ENCODE measurements at regions of chr7 and their contacts with region 1.

Region 1: DNA sequence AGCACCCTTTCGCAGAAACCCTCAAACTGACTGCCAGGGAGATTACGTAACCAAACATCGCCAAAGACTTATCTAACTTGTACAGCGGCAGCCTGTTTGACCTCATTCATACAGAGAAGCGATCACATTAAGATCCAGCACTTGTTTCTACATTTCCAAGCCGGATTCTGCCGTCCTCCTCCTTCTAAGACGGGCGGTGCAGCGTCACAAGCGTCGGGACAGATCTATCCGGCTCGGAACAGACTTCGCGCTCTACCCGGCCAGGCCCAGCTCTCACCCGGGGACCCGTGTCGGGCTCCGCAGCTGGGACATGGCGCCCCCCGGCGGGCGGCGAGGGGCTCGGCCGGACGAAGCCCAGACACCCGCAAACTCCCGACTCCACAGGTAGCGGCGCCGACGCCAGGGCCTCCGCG is 373 bp downstream of the H2AZ2 start:
- DNase-seq: peak; percentile 69
- ATAC-seq: peak; percentile 83
- H3K4me3 ChIP-seq: peak overlapping the region; percentile 64 to 92 (median 85)
- H3K27ac ChIP-seq: peak overlapping the region; percentile 83
- H3K4me1 ChIP-seq: peaks cover 40% of the 10 kb centered on the region
- H3K27me3 ChIP-seq: no peaks in the 10 kb centered on the region; a peak in 1 of 5 replicates
- CTCF ChIP-seq: peak; percentile 87
- EP300 ChIP-seq: 0 out of 4 replicates have a peak, but pooled peaks of 1 of the 2 experiments have one; percentile 1
- POLR2A ChIP-seq: no peak; a peak in 1 of 4 replicates
- RAD21 ChIP-seq: peak; percentile 97

Region 2: GRCh38 chr7:44515590-44516268 is 331.8 kb before region 1 on chr7:
- CTCF ChIA-PET with region 1: no interaction called
- POLR2A ChIA-PET with region 1: no interaction called
- in situ Hi-C with region 1: no loop called
- intact Hi-C with region 1: no loop called
- DNase-seq: no peak
- ATAC-seq: no peak
- H3K4me3 ChIP-seq: no peak overlapping the region
- H3K27ac ChIP-seq: no peak overlapping the region
- H3K4me1 ChIP-seq: peaks cover 10% of the 10 kb centered on the region
- H3K27me3 ChIP-seq: no peaks in the 10 kb centered on the region
- CTCF ChIP-seq: no peak
- EP300 ChIP-seq: no peak
- POLR2A ChIP-seq: no peak
- RAD21 ChIP-seq: no peak

Region 3: GRCh38 chr7:44581879-44582603 is 265.5 kb before region 1 on chr7 and contains the start of gene TMED4:
- CTCF ChIA-PET with region 1: interaction called, 9 read pairs
- POLR2A ChIA-PET with region 1: interaction called, 19 read pairs
- in situ Hi-C with region 1: no loop called
- intact Hi-C with region 1: no loop called
- DNase-seq: peak; percentile 96
- ATAC-seq: peak; percentile 90
- H3K4me3 ChIP-seq: peak within 1 kb of the TSS; percentile 60 to 87 (median 75)
- H3K27ac ChIP-seq: peak within 1 kb of the TSS; percentile 76
- H3K4me1 ChIP-seq: peaks cover 32% of the 10 kb centered on the region
- H3K27me3 ChIP-seq: peaks cover 0 to 11% of the 10 kb centered on the region in 2 experiments; a peak in 1 of 5 replicates
- CTCF ChIP-seq: no peak
- EP300 ChIP-seq: no peak
- POLR2A ChIP-seq: peak in 1 of 2 experiments; percentile 85; a peak in 2 of 4 replicates
- RAD21 ChIP-seq: peak; percentile 59; the same call in 1 of the 2 replicates
- total RNA-seq, gene TMED4: 39.2 and 81.4 TPM in 2 replicates

Region 4: DNA sequence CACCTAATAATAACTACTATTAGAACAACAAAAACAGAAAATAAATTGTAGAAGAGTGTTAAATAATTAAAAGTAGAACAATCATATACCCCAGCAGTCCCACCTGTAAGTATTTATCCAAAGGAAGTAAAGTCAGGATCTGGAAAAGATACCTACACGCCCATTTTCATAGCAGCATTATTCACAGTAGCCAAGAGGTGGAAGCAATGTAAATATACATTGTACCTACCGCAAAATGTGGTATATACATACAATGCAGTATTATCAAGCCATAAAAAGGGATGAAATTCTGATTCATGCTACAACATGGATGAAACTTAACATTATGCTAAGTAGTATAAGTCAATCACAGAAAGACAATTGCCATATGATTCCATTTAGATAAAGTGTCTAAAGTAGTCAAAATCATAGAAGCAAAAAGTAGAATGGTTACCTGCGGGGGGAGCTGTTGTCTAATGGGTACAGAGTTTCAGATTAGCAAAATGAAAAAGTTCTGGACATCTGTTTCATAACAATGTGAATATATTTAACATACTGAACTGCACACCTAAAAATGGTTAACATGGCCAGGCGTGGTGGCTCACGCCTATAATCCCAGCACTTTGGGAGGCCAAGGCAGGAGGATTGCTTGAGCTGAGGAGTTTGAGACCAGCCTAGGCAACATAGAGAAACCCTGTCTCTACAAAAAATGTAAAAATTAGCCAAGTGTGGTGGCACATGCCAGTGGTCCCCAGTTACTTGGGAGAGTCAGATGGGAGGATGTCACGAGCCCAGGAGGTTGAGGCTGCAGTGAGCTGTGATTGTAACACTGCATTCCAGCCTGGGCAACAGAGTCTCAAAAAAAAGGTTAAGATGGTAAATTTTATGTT is 259.4 kb before region 1 on chr7:
- CTCF ChIA-PET with region 1: interaction called, 9 read pairs
- POLR2A ChIA-PET with region 1: interaction called, 19 read pairs
- in situ Hi-C with region 1: no loop called
- intact Hi-C with region 1: loop called (anchors 1 kb)
- DNase-seq: peak; percentile 55
- ATAC-seq: peak; percentile 74
- H3K4me3 ChIP-seq: no peak overlapping the region
- H3K27ac ChIP-seq: no peak overlapping the region
- H3K4me1 ChIP-seq: peaks cover 8% of the 10 kb centered on the region
- H3K27me3 ChIP-seq: peaks cover 0 to 11% of the 10 kb centered on the region in 2 experiments; a peak in 1 of 5 replicates
- CTCF ChIP-seq: peak; percentile 76
- EP300 ChIP-seq: no peak
- POLR2A ChIP-seq: no peak
- RAD21 ChIP-seq: 0 out of 2 replicates have a peak, but pooled peaks have one; percentile 25

Region 5: DNA sequence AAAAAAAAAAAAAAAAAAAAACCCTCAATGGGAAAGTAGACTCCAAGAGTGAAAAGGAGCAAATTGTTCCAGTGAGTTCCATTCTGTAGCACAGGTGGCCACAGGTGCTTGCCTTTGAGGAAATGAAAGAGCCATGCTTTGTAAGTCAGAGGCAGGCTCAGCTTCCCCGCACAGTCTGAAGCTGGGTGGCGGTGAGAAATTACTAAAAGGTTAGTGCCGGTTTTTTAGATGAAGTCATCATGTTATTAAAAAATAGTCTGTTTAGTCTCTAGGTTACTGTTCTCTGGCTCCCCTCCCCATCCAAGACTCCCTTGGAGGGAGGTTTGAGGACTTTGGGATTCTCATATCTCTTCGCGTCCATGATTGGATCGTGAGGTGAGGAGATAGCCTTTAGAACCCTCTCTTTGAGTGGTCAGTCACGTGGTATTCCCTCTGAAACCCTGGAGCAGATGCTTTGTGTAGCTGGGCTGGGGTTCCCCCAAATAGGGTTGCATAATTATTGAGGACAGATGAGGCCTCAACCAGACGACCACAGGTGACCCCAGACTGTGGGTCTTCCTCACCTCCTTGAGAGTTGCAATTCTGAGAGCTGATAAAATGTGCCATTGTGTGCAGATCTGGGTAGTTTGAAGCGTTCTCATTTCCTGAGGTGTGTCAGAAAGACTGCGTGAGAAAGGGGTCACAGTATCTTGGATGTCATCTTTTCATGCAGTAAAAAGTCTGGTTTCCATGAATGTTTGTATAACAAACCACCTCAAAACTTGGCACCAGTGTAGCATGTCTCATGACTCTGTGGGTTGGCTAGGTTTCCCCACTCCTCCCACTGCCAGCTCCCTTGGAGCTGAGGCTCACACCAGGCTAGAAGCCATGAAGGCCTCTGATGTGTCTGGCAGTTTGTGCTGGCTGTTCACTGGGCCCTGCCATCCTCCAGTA is 214.0 kb before region 1 on chr7:
- CTCF ChIA-PET with region 1: no interaction called
- POLR2A ChIA-PET with region 1: no interaction called
- in situ Hi-C with region 1: no loop called
- intact Hi-C with region 1: no loop called
- DNase-seq: no peak
- ATAC-seq: no peak; the same call in 2 of the 3 replicates
- H3K4me3 ChIP-seq: no peak overlapping the region
- H3K27ac ChIP-seq: no peak overlapping the region
- H3K4me1 ChIP-seq: peaks cover 32% of the 10 kb centered on the region
- H3K27me3 ChIP-seq: no peaks in the 10 kb centered on the region
- CTCF ChIP-seq: no peak
- EP300 ChIP-seq: no peak
- POLR2A ChIP-seq: no peak
- RAD21 ChIP-seq: no peak

Region 6: GRCh38 chr7:44797329-44798251 is 49.9 kb before region 1 on chr7:
- CTCF ChIA-PET with region 1: interaction called, 7 read pairs
- POLR2A ChIA-PET with region 1: interaction called, 20 read pairs
- in situ Hi-C with region 1: no loop called
- intact Hi-C with region 1: loop called (anchors 2 kb)
- DNase-seq: peak; percentile 79
- ATAC-seq: peak; percentile 68
- H3K4me3 ChIP-seq: peak overlapping the region; percentile 80 to 86 (median 85)
- H3K27ac ChIP-seq: peak overlapping the region; percentile 96
- H3K4me1 ChIP-seq: peaks cover 37% of the 10 kb centered on the region
- H3K27me3 ChIP-seq: no peaks in the 10 kb centered on the region; a peak in 1 of 5 replicates
- CTCF ChIP-seq: peak; percentile 83
- EP300 ChIP-seq: no peak
- POLR2A ChIP-seq: peak; percentile 15 to 89; a peak in 3 of 4 replicates
- RAD21 ChIP-seq: peak; percentile 9; the same call in 1 of the 2 replicates

Region 7: GRCh38 chr7:44811086-44811485 is 36.4 kb before region 1 on chr7:
- CTCF ChIA-PET with region 1: no interaction called
- POLR2A ChIA-PET with region 1: interaction called, 7 read pairs
- in situ Hi-C with region 1: no loop called
- intact Hi-C with region 1: loop called (anchors 1 kb)
- DNase-seq: peak; percentile 73
- ATAC-seq: peak; percentile 28
- H3K4me3 ChIP-seq: no peak overlapping the region; a peak in 1 of 6 replicates
- H3K27ac ChIP-seq: no peak overlapping the region
- H3K4me1 ChIP-seq: peaks cover 36% of the 10 kb centered on the region
- H3K27me3 ChIP-seq: no peaks in the 10 kb centered on the region
- CTCF ChIP-seq: no peak
- EP300 ChIP-seq: peak in 1 of 2 experiments; percentile 53; a peak in 2 of 4 replicates
- POLR2A ChIP-seq: no peak
- RAD21 ChIP-seq: no peak

Region 8: DNA sequence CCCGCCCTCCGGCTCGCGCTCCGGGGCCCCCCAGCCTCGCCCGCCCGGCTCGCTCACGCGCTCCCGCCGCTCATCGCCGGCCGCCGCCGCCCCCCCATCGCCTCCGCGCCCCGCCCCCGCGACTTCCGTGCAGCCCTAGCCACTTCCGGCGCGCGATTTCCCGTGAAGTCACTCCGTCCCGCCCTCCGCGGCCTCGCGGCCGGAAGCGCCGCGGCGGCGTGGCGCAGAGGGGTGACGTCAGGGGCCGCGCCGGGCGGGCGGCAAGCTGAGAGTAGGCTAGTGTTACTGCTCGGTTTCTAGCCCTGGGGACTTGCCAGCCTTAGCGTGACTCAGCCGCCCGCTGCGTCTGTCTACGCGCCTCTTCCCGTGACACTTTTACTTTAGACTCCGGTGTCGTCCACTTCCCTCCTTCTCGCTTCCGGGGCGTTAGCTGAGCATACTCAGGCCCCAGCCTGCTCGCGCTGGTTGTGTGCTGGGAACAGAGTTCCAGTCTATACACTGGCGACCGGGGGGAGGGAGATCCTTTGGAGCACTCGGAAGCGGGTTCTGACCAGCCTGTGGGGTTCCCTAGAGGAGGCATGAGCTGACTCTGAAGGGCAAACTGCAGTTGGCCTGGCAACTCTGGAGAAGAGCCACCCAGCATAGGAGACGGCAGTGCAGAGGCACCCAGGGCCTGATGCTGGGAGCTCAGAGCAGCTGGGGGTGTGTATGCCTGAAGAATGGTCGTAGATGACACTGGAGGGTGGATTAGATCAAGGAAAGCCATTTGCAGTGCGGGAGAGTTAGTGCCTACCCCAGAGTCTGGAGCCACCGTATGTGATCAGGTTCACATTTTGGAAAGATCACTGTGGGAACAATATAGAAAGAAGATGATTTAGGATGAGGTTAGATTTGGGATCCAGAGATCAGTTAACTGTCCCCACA is 38.1 kb after region 1 on chr7 and contains the start of gene PURB:
- CTCF ChIA-PET with region 1: no interaction called
- POLR2A ChIA-PET with region 1: interaction called, 16 read pairs
- in situ Hi-C with region 1: no loop called
- intact Hi-C with region 1: no loop called
- DNase-seq: peak; percentile 86
- ATAC-seq: peak; percentile 92
- H3K4me3 ChIP-seq: peak within 1 kb of the TSS; percentile 73 to 96 (median 88)
- H3K27ac ChIP-seq: peak within 1 kb of the TSS; percentile 92
- H3K4me1 ChIP-seq: peaks cover 48% of the 10 kb centered on the region
- H3K27me3 ChIP-seq: no peaks in the 10 kb centered on the region
- CTCF ChIP-seq: no peak
- EP300 ChIP-seq: peak; percentile 42 to 58; a peak in 2 of 4 replicates
- POLR2A ChIP-seq: peak; percentile 84 to 86
- RAD21 ChIP-seq: peak; percentile 60
- total RNA-seq, gene PURB: 4.3 and 10.1 TPM in 2 replicates

Region 9: DNA sequence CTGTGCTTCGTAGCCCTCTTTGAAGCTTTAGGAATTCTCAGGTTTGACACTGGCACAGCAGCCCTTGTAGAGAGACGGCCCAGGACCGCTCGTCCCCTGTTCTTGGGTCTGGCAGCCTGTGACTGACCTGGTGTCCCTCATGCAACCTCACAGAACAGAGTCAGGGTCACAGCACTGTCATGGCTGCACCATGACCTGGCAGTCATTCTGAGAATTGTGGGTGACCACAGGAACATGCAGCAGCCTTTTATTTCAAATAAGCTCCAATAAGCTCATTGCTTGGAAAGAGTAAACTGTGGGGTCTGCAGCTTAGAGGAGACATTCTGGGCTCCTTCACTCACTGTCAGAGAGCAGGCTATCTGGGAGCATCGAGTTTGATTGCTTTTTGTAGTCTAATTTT is 88.8 kb after region 1 on chr7:
- CTCF ChIA-PET with region 1: no interaction called
- POLR2A ChIA-PET with region 1: no interaction called
- in situ Hi-C with region 1: no loop called
- intact Hi-C with region 1: no loop called
- DNase-seq: no peak
- ATAC-seq: no peak; the same call in 2 of the 3 replicates
- H3K4me3 ChIP-seq: no peak overlapping the region
- H3K27ac ChIP-seq: no peak overlapping the region
- H3K4me1 ChIP-seq: no peaks in the 10 kb centered on the region
- H3K27me3 ChIP-seq: peaks cover 0 to 11% of the 10 kb centered on the region in 2 experiments; a peak in 1 of 5 replicates
- CTCF ChIP-seq: no peak
- EP300 ChIP-seq: no peak
- POLR2A ChIP-seq: no peak
- RAD21 ChIP-seq: no peak

Region 10: GRCh38 chr7:45007571-45008328 is 160.2 kb after region 1 on chr7:
- CTCF ChIA-PET with region 1: no interaction called
- POLR2A ChIA-PET with region 1: no interaction called
- in situ Hi-C with region 1: no loop called
- intact Hi-C with region 1: no loop called
- DNase-seq: no peak
- ATAC-seq: no peak
- H3K4me3 ChIP-seq: no peak overlapping the region
- H3K27ac ChIP-seq: no peak overlapping the region
- H3K4me1 ChIP-seq: 0 out of 2 replicates have a peak, but pooled peaks cover 7% of the 10 kb centered on the region
- H3K27me3 ChIP-seq: no peaks in the 10 kb centered on the region
- CTCF ChIP-seq: no peak
- EP300 ChIP-seq: no peak
- POLR2A ChIP-seq: no peak
- RAD21 ChIP-seq: no peak

Measured in HepG2 (cell line).